ENCODE measurements at regions of chr3 and their contacts with region 1.

Region 1: GRCh38 chr3:46496741-46497554 is 828 bp upstream of the RTP3 start:
- DNase-seq: no peak
- H3K4me3 ChIP-seq: no peak overlapping the region
- H3K27ac ChIP-seq: no peak overlapping the region
- H3K4me1 ChIP-seq: peaks cover 11% of the 10 kb centered on the region
- H3K27me3 ChIP-seq: no peaks in the 10 kb centered on the region
- CTCF ChIP-seq: peak; percentile 33 to 49

Region 2: GRCh38 chr3:46228259-46229242 is 268.4 kb before region 1 on chr3:
- CTCF ChIA-PET with region 1: no interaction called
- dilution Hi-C with region 1: no loop called
- in situ Hi-C with region 1: no loop called
- intact Hi-C with region 1: no loop called
- DNase-seq: peak; percentile 82
- H3K4me3 ChIP-seq: no peak overlapping the region
- H3K27ac ChIP-seq: no peak overlapping the region
- H3K4me1 ChIP-seq: peaks cover 5% of the 10 kb centered on the region
- H3K27me3 ChIP-seq: peaks cover 5% of the 10 kb centered on the region
- CTCF ChIP-seq: no peak

Region 3: GRCh38 chr3:46423588-46423987 is 73.4 kb before region 1 on chr3:
- CTCF ChIA-PET with region 1: no interaction called
- dilution Hi-C with region 1: no loop called
- in situ Hi-C with region 1: no loop called
- intact Hi-C with region 1: no loop called
- DNase-seq: peak; percentile 91
- H3K4me3 ChIP-seq: no peak overlapping the region
- H3K27ac ChIP-seq: peak overlapping the region; percentile 23
- H3K4me1 ChIP-seq: peaks cover 42% of the 10 kb centered on the region
- H3K27me3 ChIP-seq: no peaks in the 10 kb centered on the region
- CTCF ChIP-seq: no peak

Region 4: DNA sequence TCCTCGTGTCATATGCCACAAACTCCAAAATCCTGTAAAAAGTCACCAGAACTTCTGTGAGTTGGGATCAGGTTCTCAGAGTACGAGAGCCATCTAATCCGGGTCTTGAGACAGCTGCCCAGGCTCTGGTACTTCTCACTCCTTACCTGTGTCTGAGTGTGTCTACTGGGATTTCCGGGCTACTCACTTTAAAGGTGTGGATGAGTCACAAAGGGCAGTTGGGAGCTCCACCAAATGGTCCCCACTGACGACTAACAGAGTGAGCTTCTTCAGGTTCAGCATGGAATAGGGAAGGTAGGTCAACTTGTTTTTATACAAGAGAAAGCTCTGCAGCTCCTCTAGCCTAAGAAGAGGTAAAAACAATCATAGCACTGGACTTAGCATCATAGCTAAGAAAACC is 30.3 kb after region 1 on chr3:
- CTCF ChIA-PET with region 1: no interaction called
- dilution Hi-C with region 1: no loop called
- in situ Hi-C with region 1: no loop called
- intact Hi-C with region 1: no loop called
- DNase-seq: peak; percentile 64
- H3K4me3 ChIP-seq: no peak overlapping the region
- H3K27ac ChIP-seq: no peak overlapping the region
- H3K4me1 ChIP-seq: peaks cover 7% of the 10 kb centered on the region
- H3K27me3 ChIP-seq: no peaks in the 10 kb centered on the region
- CTCF ChIP-seq: no peak

Region 5: GRCh38 chr3:46549408-46549904 is 52.5 kb after region 1 on chr3:
- CTCF ChIA-PET with region 1: no interaction called
- dilution Hi-C with region 1: no loop called
- in situ Hi-C with region 1: no loop called
- intact Hi-C with region 1: no loop called
- DNase-seq: no peak
- H3K4me3 ChIP-seq: no peak overlapping the region
- H3K27ac ChIP-seq: no peak overlapping the region
- H3K4me1 ChIP-seq: no peaks in the 10 kb centered on the region
- H3K27me3 ChIP-seq: no peaks in the 10 kb centered on the region
- CTCF ChIP-seq: no peak

Region 6: DNA sequence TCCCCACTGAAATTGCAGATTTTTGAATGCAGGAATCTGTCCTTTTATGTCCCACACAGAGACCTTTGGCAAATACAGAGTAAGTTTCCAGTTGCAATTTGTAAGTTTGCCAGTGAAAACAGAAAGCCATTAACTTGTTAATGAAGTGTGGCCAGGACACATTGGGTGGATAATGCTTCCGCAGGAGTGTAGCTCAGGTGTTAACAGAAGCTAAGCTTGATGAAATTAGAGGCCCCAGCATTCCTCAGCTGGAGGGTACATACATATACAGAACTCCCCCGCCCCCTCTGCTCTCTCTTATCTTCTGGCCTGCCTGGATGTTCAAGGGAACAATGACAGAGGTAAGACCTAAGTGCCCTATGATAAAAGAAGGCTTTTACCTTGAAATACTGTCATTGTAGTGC is 77.3 kb after region 1 on chr3:
- CTCF ChIA-PET with region 1: no interaction called
- dilution Hi-C with region 1: loop called (anchors 5 kb)
- in situ Hi-C with region 1: no loop called
- intact Hi-C with region 1: no loop called
- DNase-seq: no peak
- H3K4me3 ChIP-seq: no peak overlapping the region
- H3K27ac ChIP-seq: no peak overlapping the region
- H3K4me1 ChIP-seq: no peaks in the 10 kb centered on the region
- H3K27me3 ChIP-seq: no peaks in the 10 kb centered on the region
- CTCF ChIP-seq: no peak

Measured in mammary epithelial cell (primary cell).